ENCODE measurements at regions of chr17 and their contacts with region 1.

Region 1: DNA sequence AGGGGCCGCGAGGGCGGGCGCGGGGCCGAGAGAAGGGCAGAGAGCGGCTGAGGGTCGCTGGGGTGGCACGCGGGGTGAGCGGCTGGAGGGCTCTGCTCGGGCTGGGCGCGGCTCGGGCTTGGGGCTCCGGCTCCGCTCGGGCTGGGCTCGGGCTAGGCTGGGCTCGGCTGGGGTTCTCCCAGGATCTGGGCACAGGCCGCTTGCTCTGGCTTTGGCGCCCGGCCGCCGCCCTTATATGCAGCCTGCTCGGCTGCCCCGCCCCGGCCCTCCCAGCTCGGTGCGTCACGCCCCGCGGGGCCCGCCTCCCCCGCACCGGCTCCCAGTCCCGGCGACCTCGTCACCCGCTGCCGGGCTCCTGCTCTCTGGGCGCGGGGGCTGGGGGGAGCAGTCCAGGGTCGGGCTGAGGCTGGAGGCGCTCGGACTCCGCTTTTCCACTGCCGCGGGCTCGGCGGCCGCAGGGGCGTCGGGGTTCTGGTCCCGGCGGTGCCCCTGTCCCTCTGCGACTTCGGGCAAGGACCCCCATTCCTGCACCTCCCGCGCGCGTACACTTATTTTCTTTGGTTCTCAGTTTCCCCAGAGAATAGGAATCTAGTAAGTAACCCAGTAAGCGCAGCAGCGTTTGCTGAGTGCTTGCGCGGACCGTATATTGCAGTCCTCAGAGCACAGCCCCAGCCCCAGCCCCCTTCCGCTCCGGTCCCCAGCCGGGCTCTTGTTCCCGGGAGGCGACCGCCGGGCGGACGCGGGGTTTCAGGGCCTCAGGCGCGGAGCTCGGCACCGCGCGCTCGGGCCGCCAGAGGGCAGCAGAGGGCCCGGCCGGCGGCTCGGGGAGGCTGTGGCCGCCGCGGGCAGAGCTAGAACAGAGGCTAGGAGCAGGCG is at the start of gene RASD1:
- DNase-seq: peak; percentile 73
- H3K4me3 Mint-ChIP-seq: peak within 1 kb of the TSS; percentile 52
- H3K27ac Mint-ChIP-seq: no peak within 1 kb of the TSS
- H3K4me1 Mint-ChIP-seq: no peaks in the 10 kb centered on the region
- H3K27me3 Mint-ChIP-seq: no peaks in the 10 kb centered on the region
- CTCF ChIP-seq: peak; percentile 72
- total RNA-seq, gene RASD1: not detected in 2 replicates

Region 2: DNA sequence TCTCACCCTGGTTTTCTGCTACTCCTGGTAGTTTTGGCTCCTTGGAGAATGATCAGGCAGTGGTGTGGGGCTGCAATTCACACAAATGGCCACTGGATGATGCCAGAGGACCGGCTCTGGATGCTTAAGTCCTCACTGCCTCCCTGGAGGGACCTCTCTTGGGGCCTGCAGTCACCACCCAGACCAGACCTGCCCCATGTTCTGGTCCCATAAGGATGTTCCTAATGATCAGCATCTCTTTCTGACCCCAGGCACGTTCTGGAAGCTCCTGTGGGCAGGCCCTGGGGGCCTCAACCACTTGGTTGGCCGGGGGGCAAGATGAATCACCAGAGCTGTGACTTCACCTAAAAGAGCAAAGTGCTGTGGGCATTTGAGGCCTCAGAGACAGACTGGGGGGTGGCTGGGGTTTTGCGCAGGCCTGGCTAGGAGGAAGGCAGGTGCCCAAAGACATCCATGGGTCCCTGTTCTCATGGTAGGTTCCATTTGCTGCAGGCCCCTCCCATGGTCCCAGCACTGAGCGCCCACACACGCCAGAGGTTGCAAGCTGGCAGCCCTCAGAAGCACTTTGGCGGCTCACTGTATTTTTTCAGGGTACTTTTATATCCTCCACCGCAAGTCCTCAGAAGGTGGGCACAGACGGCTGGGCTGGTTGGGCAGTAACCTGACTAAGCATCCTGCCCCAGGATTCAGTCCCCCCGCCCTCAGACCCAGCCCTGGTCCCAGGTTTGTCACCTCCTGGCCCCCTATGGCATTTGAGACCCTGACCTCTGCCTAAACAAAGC is 140.1 kb before region 1 on chr17:
- CTCF ChIA-PET with region 1: interaction called, 5 read pairs
- intact Hi-C with region 1: loop called (anchors 5 kb)
- DNase-seq: peak; percentile 74
- H3K4me3 Mint-ChIP-seq: no peak overlapping the region
- H3K27ac Mint-ChIP-seq: no peak overlapping the region
- H3K4me1 Mint-ChIP-seq: peaks cover 8% of the 10 kb centered on the region
- H3K27me3 Mint-ChIP-seq: peaks cover 43% of the 10 kb centered on the region
- CTCF ChIP-seq: peak; percentile 88

Region 3: GRCh38 chr17:17568749-17569195 is 72.3 kb after region 1 on chr17:
- CTCF ChIA-PET with region 1: interaction called, 17 read pairs
- intact Hi-C with region 1: loop called (anchors 1 kb)
- DNase-seq: peak; percentile 86
- H3K4me3 Mint-ChIP-seq: no peak overlapping the region
- H3K27ac Mint-ChIP-seq: no peak overlapping the region
- H3K4me1 Mint-ChIP-seq: no peaks in the 10 kb centered on the region
- H3K27me3 Mint-ChIP-seq: no peaks in the 10 kb centered on the region
- CTCF ChIP-seq: peak; percentile 23

Region 4: DNA sequence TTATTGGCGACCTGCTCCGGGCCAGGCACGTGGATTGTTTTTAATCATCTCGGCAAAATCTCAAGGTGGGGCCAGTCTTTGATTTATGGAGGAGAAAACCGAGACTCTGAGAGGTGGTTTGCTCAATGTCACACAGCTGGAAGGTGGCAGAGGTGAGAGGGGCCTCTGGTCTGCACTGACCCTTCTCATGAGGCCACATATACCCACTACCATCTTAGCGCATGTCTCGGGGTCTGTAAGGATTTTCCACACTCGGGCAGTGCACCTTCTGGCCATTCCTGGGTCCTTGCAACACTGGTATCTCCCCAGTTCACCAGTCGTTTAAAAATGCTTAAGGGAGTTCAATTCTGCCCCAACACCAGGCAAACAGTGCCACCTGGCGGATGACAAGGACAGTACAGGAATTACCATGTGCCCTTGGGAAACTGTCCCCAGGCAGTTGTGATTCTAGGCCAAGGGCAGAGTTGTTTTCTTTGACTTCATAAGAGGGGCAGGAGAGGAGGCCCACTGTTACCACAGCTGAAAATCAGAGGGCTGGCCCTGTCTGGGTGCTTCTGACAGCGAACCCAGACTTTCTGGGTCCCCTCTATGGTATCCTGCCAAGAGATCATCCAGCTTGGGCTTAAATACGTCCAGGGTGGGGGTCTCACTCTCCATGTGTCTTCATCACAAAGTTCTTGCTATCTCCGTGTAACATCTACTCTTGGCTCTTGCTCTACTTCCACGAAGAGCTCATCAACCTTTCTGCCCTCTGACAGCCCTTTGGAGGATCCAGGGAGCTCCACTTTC is 145.4 kb after region 1 on chr17:
- CTCF ChIA-PET with region 1: interaction called, 8 read pairs
- intact Hi-C with region 1: loop called (anchors 2 kb)
- DNase-seq: peak; percentile 75
- H3K4me3 Mint-ChIP-seq: no peak overlapping the region
- H3K27ac Mint-ChIP-seq: no peak overlapping the region
- H3K4me1 Mint-ChIP-seq: no peaks in the 10 kb centered on the region
- H3K27me3 Mint-ChIP-seq: peaks cover 25% of the 10 kb centered on the region
- CTCF ChIP-seq: peak; percentile 75

Measured in Calu3 (cell line).